Dorsolateral prefrontal cortex (tissue), 120 donors: ENCODE measurements at regions of chrX and their contacts with region 1.

Region 1: DNA sequence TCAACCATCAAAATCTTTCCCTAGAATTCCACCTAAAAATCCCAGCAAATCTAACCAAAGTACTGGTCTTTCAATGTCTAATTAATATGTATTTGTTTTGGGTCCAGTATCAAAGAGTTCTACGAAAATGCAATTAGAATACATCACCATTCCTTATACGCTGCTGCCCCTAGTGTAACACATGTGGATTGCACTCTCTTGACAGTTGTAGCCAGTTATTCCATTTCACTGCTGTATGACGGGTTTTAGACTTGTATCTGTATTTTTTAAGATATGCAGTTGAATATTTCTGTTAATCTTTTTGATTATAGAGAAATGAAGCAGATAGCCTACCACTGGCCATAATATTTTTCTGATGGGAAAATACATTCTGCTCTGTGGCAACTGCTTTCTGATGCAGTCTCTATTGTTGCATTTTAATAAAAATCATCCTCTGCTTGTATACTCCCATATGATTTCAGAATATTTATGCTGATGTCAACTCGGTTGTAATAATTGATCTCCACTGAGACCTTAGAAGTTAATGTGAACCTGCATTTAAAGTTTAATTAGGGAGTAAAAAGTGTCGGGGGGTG is 17.1 kb upstream of the PAGE2B start:
- DNase-seq: peak in 2 of 10 donors; percentile 18 to 32
- H3K4me3 ChIP-seq: peak overlapping the region in 49 of 59 donors; percentile 1 to 57 (median 33)
- H3K27ac ChIP-seq: peak overlapping the region in 3 of 59 donors; percentile 24 to 38 (median 26)
- H3K27me3 ChIP-seq: peaks cover 0 to 39% (median 1%) of the 10 kb centered on the region in 45 donors
- CTCF ChIP-seq: peak; percentile 21 to 87 (median 76)

Region 2: GRCh38 chrX:54891573-54891972 is 166.2 kb before region 1 on chrX:
- intact Hi-C with region 1: loop called (anchors 2 to 5 kb)
- DNase-seq: peak in 2 of 10 donors; percentile 9 to 15
- H3K4me3 ChIP-seq: no peak overlapping the region
- H3K27ac ChIP-seq: no peak overlapping the region
- H3K27me3 ChIP-seq: peaks cover 0 to 35% (median 9%) of the 10 kb centered on the region in 45 donors
- CTCF ChIP-seq: peak in 53 of 56 donors; percentile 11 to 70 (median 41)

Region 3: GRCh38 chrX:55484948-55485347 is 427.2 kb after region 1 on chrX:
- intact Hi-C with region 1: no loop called
- DNase-seq: no peak
- H3K4me3 ChIP-seq: no peak overlapping the region
- H3K27ac ChIP-seq: peak overlapping the region in 3 of 59 donors; percentile 2 to 37 (median 32)
- H3K27me3 ChIP-seq: peaks cover 0 to 50% (median 5%) of the 10 kb centered on the region in 45 donors
- CTCF ChIP-seq: no peak